ENCODE measurements at regions of chr15 and their contacts with region 1.

Region 1: GRCh38 chr15:48877630-48878595 is at the start of gene EID1:
- DNase-seq: peak; percentile 82 to 97 (median 90)
- ATAC-seq: peak; percentile 93 to 98 (median 95)
- H3K4me3 ChIP-seq: peak within 1 kb of the TSS; percentile 65 to 84
- H3K4me3 Mint-ChIP-seq: peak within 1 kb of the TSS; percentile 96 to 99 (median 97)
- H3K27ac ChIP-seq: peak within 1 kb of the TSS; percentile 83
- H3K27ac Mint-ChIP-seq: peak within 1 kb of the TSS; percentile 97 to 98
- H3K4me1 ChIP-seq: peaks cover 7 to 13% of the 10 kb centered on the region in 2 experiments
- H3K4me1 Mint-ChIP-seq: peaks cover 20 to 31% (median 29%) of the 10 kb centered on the region in 3 donors
- H3K27me3 ChIP-seq: peaks cover 0 to 4% of the 10 kb centered on the region in 2 experiments
- H3K27me3 Mint-ChIP-seq: peaks cover 12 to 14% of the 10 kb centered on the region in 2 donors
- total RNA-seq, gene EID1: 43.4 to 82.0 (median 74.4) TPM

Region 2: GRCh38 chr15:48810414-48811317 is 67.2 kb before region 1 on chr15 and contains the start of gene CEP152:
- CTCF ChIA-PET with region 1: interaction called in 1 of 2 experiments, 10 read pairs
- POLR2A ChIA-PET with region 1: interaction called in 1 of 2 experiments, 11 read pairs
- DNase-seq: peak; percentile 94 to 99 (median 97)
- ATAC-seq: peak; percentile 94 to 99 (median 96)
- H3K4me3 ChIP-seq: peak within 1 kb of the TSS; percentile 78 to 90
- H3K4me3 Mint-ChIP-seq: peak within 1 kb of the TSS; percentile 81 to 97 (median 94)
- H3K27ac ChIP-seq: peak within 1 kb of the TSS; percentile 35
- H3K27ac Mint-ChIP-seq: peak within 1 kb of the TSS; percentile 70 to 87
- H3K4me1 ChIP-seq: peaks cover 10 to 12% of the 10 kb centered on the region in 2 experiments
- H3K4me1 Mint-ChIP-seq: peaks cover 22 to 39% (median 32%) of the 10 kb centered on the region in 3 donors
- H3K27me3 ChIP-seq: peaks cover 0 to 2% of the 10 kb centered on the region in 2 experiments
- H3K27me3 Mint-ChIP-seq: peaks cover 5% of the 10 kb centered on the region in 2 donors
- total RNA-seq, gene CEP152: 6.6 to 11.4 (median 10.3) TPM

Region 3: DNA sequence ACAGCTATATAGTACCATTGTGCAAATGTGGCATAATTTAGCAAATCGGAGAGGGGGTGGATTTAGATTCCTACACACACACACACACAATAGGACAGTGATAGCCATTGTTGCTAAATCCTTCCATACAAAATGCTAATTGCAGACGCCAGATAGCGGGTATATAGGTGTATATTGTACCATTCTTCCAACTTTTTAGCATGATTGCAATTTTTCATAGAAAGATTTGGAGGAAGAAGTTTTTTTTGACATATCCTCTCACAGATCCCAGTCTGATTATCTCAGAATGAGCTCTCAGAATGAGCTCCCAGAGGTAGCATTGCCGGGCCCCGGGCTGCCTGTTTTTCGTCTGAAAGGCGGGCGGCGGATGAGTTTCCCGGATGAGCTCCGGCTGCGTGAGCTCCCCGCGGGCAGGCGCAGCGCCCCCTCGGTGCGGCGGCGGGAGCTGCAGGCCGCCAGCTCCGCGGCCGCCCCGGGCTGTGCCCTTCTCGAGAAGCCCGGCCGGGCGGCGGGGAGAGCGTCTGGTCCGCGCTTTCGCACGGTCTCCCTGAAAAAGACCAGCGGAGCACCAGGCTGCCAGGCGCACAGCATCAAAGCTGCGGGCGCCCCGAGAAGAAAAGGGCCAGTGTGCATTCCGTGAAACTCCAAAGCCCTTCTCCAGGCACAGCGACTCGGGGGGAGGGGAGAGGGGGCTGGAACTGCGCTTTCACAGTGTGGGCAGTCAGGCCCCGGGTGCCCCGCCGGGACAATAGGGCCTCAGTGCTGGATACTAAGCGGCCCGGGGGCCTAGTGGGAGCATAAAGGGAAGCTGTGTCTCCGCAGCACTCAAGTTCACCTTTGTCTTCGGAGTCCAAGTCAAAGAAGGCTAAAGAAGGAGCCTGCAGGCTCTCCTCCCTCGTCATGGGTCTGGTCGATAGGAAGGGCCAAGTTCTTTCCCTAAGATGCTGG is 97.8 kb after region 1 on chr15:
- CTCF ChIA-PET with region 1: interaction called in 1 of 2 experiments, 15 read pairs
- POLR2A ChIA-PET with region 1: no interaction called
- DNase-seq: peak; percentile 37 to 83 (median 62)
- ATAC-seq: peak; percentile 99
- H3K4me3 ChIP-seq: peak overlapping the region; percentile 49 to 50
- H3K4me3 Mint-ChIP-seq: peak overlapping the region; percentile 44 to 58 (median 46)
- H3K27ac ChIP-seq: no peak overlapping the region
- H3K27ac Mint-ChIP-seq: no peak overlapping the region
- H3K4me1 ChIP-seq: peaks cover 0 to 8% of the 10 kb centered on the region in 2 experiments
- H3K4me1 Mint-ChIP-seq: peaks cover 0 to 3% (median 2%) of the 10 kb centered on the region in 3 donors
- H3K27me3 ChIP-seq: peaks cover 0 to 24% of the 10 kb centered on the region in 2 experiments
- H3K27me3 Mint-ChIP-seq: peaks cover 30 to 34% of the 10 kb centered on the region in 2 donors

Region 4: GRCh38 chr15:49155110-49155833 is 277.4 kb after region 1 on chr15 and contains the start of gene COPS2:
- CTCF ChIA-PET with region 1: interaction called in 1 of 2 experiments, 13 read pairs
- POLR2A ChIA-PET with region 1: interaction called, 3 to 7 read pairs
- DNase-seq: peak; percentile 82 to 97 (median 91)
- ATAC-seq: peak; percentile 93 to 97 (median 95)
- H3K4me3 ChIP-seq: peak within 1 kb of the TSS; percentile 88 to 94
- H3K4me3 Mint-ChIP-seq: peak within 1 kb of the TSS; percentile 99 to 100 (median 100)
- H3K27ac ChIP-seq: peak within 1 kb of the TSS; percentile 91
- H3K27ac Mint-ChIP-seq: peak within 1 kb of the TSS; percentile 97 to 98
- H3K4me1 ChIP-seq: peaks cover 8 to 17% of the 10 kb centered on the region in 2 experiments
- H3K4me1 Mint-ChIP-seq: peaks cover 56 to 62% (median 60%) of the 10 kb centered on the region in 3 donors
- H3K27me3 ChIP-seq: no peaks in the 10 kb centered on the region
- H3K27me3 Mint-ChIP-seq: no peaks in the 10 kb centered on the region
- total RNA-seq, gene COPS2: 41.3 to 104 (median 45.6) TPM

Measured in T-cell (primary cell).